ENCODE measurements at regions of chr1 and their contacts with region 1.

Region 1: GRCh38 chr1:18820791-18821641 is 38.4 kb downstream of the TAS1R2 start:
- DNase-seq: peak; percentile 2 to 20 (median 5)
- H3K4me3 ChIP-seq: no peak overlapping the region
- H3K4me3 Mint-ChIP-seq: no peak overlapping the region
- H3K27ac ChIP-seq: no peak overlapping the region
- H3K27ac Mint-ChIP-seq: no peak overlapping the region
- H3K4me1 ChIP-seq: no peaks in the 10 kb centered on the region
- H3K4me1 Mint-ChIP-seq: no peaks in the 10 kb centered on the region
- H3K27me3 ChIP-seq: peaks cover 0 to 17% of the 10 kb centered on the region in 2 donors
- H3K27me3 Mint-ChIP-seq: peaks cover 31 to 39% (median 38%) of the 10 kb centered on the region in 3 donors
- CTCF ChIP-seq: peak; percentile 87

Region 2: GRCh38 chr1:18597160-18598042 is 223.6 kb before region 1 on chr1:
- intact Hi-C with region 1: loop called (anchors 5 to 10 kb)
- DNase-seq: peak in 1 of 3 donors; percentile 10
- H3K4me3 ChIP-seq: no peak overlapping the region
- H3K4me3 Mint-ChIP-seq: no peak overlapping the region
- H3K27ac ChIP-seq: no peak overlapping the region
- H3K27ac Mint-ChIP-seq: no peak overlapping the region
- H3K4me1 ChIP-seq: no peaks in the 10 kb centered on the region
- H3K4me1 Mint-ChIP-seq: no peaks in the 10 kb centered on the region
- H3K27me3 ChIP-seq: peaks cover 2 to 4% of the 10 kb centered on the region in 2 donors
- H3K27me3 Mint-ChIP-seq: peaks cover 20 to 47% (median 26%) of the 10 kb centered on the region in 3 donors
- CTCF ChIP-seq: peak; percentile 73

Region 3: DNA sequence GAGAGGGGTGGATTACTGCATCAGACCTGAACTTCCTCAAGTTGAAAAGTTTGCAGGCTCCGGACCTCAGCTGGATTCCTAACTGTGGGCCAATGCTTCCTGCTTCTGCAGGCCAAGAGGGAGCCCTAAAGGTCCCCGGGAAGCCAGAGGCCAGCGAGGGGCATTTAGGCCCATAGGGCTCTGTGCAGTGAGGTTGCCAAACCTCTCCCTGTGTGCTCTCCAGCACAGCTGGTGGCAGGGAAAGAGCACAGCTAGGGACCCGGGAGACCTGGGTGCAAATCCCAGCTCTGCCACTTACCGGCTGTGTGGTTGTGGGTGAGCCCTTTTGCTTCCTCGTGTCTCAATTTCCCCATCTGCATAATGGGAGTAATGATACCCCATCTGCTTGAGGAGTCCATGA is 89.9 kb before region 1 on chr1:
- intact Hi-C with region 1: no loop called
- DNase-seq: no peak
- H3K4me3 ChIP-seq: no peak overlapping the region
- H3K4me3 Mint-ChIP-seq: no peak overlapping the region
- H3K27ac ChIP-seq: no peak overlapping the region
- H3K27ac Mint-ChIP-seq: no peak overlapping the region
- H3K4me1 ChIP-seq: no peaks in the 10 kb centered on the region
- H3K4me1 Mint-ChIP-seq: no peaks in the 10 kb centered on the region
- H3K27me3 ChIP-seq: peaks cover 0 to 7% of the 10 kb centered on the region in 2 donors
- H3K27me3 Mint-ChIP-seq: peaks cover 15 to 43% (median 34%) of the 10 kb centered on the region in 3 donors
- CTCF ChIP-seq: no peak